Activated CD4-positive, alpha-beta memory T cell treated with anti-CD3 and anti-CD28 coated beads, Interleukin-2, amount 10 ng/mL, durations not matched to agents 7 days and 5 days (primary cell): ENCODE measurements at regions of chr11 and their contacts with region 1.

Region 1: DNA sequence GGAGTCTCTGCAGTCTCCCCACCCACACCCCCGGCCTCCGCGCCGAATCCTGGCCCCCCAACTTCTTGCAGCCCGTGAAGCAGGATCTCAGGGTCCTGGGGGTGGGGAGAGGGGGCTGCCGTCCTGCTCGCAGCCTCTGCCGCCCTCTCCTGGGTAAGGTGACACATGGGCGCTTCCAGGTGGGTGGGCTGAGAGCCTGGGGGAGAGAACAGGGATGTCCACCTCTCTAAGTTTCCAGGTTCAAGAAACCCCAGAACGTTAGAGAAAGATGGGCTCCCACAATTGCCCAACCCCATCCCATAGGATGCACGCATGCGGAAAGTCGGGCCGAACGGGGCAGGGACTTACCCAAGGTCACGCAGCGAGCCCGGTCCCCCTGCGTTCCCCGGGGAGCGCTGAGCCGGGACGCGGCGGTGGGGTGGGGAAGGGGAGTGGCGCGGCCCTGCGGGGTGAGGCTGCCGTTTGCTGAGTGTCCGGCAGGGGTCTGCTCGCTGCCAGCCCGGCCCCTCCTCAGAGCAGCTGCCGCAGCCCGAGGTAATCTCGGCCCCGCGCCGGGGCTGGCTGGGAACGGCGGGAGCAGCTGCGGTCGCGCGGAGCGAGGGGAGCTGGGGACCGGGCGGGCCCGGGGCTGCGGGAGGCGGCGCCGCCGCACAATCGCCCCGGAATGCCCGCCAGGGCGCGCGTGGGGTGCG is 705 bp upstream of the CAPN1 start:
- DNase-seq: peak; percentile 65
- H3K4me3 Mint-ChIP-seq: peak overlapping the region; percentile 95
- H3K27ac Mint-ChIP-seq: peak overlapping the region; percentile 65
- H3K4me1 Mint-ChIP-seq: peaks cover 25% of the 10 kb centered on the region
- H3K27me3 Mint-ChIP-seq: no peaks in the 10 kb centered on the region

Region 2: DNA sequence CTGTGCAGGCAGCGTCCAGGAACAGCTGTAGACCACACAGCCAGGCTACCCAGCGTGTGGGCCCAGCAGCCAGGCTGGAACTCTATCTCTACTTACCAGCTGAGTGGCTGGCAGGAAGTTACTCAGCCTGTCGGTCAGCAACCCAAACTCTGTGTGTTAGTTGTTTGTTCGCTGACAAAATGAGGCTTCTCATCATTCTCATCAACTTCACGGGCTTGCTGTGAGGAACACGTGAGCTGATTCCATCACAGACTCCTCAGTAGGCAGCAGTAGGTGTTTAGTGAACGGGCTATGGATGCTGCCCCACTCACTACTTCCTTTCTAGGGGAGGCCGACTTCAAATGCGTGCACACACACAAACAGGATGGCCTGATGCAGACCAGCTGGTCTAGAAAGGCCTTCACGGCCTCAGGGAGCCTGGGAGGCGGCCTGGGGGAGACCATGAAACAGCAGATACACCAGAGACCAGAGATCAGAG is 11.8 kb before region 1 on chr11:
- CTCF ChIA-PET with region 1: interaction called, 3 read pairs
- POLR2A ChIA-PET with region 1: interaction called, 10 read pairs
- DNase-seq: no peak
- H3K4me3 Mint-ChIP-seq: no peak overlapping the region
- H3K27ac Mint-ChIP-seq: peak overlapping the region; percentile 70
- H3K4me1 Mint-ChIP-seq: peaks cover 11% of the 10 kb centered on the region
- H3K27me3 Mint-ChIP-seq: no peaks in the 10 kb centered on the region